Naive thymus-derived CD4-positive, alpha-beta T cell (primary cell): ENCODE measurements at regions of chr1 and their contacts with region 1.

Region 1: GRCh38 chr1:211382714-211383480 is 56.3 kb downstream of the TRAF5 start:
- DNase-seq: peak; percentile 53 to 85 (median 64)
- ATAC-seq: peak; percentile 94
- H3K4me3 ChIP-seq: peak overlapping the region; percentile 77
- H3K4me3 Mint-ChIP-seq: peak overlapping the region; percentile 87 to 97 (median 92)
- H3K27ac ChIP-seq: peak overlapping the region; percentile 80
- H3K27ac Mint-ChIP-seq: peak overlapping the region; percentile 92 to 98 (median 95)
- H3K4me1 ChIP-seq: peaks cover 5% of the 10 kb centered on the region in 2 donors
- H3K4me1 Mint-ChIP-seq: peaks cover 0 to 39% (median 31%) of the 10 kb centered on the region in 7 donors
- H3K27me3 ChIP-seq: no peaks in the 10 kb centered on the region
- H3K27me3 Mint-ChIP-seq: peaks cover 0 to 5% (median 0%) of the 10 kb centered on the region in 5 donors

Region 2: GRCh38 chr1:210978316-210978993 is 404.4 kb before region 1 on chr1:
- CTCF ChIA-PET with region 1: no interaction called
- POLR2A ChIA-PET with region 1: no interaction called
- intact Hi-C with region 1: no loop called
- DNase-seq: no peak
- ATAC-seq: no peak
- H3K4me3 ChIP-seq: no peak overlapping the region
- H3K4me3 Mint-ChIP-seq: no peak overlapping the region
- H3K27ac ChIP-seq: no peak overlapping the region
- H3K27ac Mint-ChIP-seq: no peak overlapping the region
- H3K4me1 ChIP-seq: no peaks in the 10 kb centered on the region
- H3K4me1 Mint-ChIP-seq: no peaks in the 10 kb centered on the region
- H3K27me3 ChIP-seq: no peaks in the 10 kb centered on the region
- H3K27me3 Mint-ChIP-seq: peaks cover 0 to 19% (median 6%) of the 10 kb centered on the region in 5 donors

Region 3: GRCh38 chr1:211066781-211067384 is 316.0 kb before region 1 on chr1:
- CTCF ChIA-PET with region 1: no interaction called
- POLR2A ChIA-PET with region 1: no interaction called
- intact Hi-C with region 1: no loop called
- DNase-seq: no peak
- ATAC-seq: no peak
- H3K4me3 ChIP-seq: no peak overlapping the region
- H3K4me3 Mint-ChIP-seq: no peak overlapping the region
- H3K27ac ChIP-seq: no peak overlapping the region
- H3K27ac Mint-ChIP-seq: no peak overlapping the region
- H3K4me1 ChIP-seq: no peaks in the 10 kb centered on the region
- H3K4me1 Mint-ChIP-seq: no peaks in the 10 kb centered on the region
- H3K27me3 ChIP-seq: no peaks in the 10 kb centered on the region
- H3K27me3 Mint-ChIP-seq: peaks cover 0 to 31% (median 17%) of the 10 kb centered on the region in 5 donors

Region 4: DNA sequence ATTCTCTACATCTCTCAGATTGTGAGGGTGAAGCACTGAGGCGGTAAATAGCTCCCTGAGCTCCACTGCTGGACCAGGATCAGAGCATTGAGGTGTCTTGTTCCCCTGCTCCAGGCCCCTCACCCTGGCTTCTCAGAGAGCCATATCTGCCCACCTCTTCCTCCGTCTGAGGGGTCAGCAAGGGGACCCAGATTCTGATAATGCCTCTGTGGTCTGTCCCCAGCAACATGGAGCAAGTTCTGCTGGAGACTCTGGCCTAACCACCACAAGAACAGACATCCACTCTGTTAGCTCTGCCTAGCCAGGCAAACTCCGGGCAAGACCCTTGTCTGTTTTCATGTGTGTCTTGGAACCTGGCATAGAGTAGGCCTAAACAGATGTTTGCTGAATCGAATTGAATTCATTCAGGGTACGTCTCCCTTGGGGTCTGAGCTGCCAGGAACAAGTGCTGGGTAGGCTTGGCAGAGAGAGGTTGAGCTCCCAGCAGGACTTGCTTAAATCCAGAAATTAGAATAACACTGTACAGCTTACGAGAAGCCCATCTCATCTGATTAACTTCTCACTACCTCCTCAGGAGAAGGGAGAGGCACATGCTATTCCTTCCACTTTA is 53.9 kb before region 1 on chr1:
- CTCF ChIA-PET with region 1: interaction called, 3 read pairs
- POLR2A ChIA-PET with region 1: interaction called, 10 read pairs
- intact Hi-C with region 1: loop called in 1 of 2 experiments (anchors 1 kb)
- DNase-seq: no peak
- ATAC-seq: no peak
- H3K4me3 ChIP-seq: peak overlapping the region; percentile 72
- H3K4me3 Mint-ChIP-seq: peak overlapping the region; percentile 87 to 98 (median 97)
- H3K27ac ChIP-seq: peak overlapping the region; percentile 82
- H3K27ac Mint-ChIP-seq: peak overlapping the region; percentile 87 to 98 (median 94)
- H3K4me1 ChIP-seq: peaks cover 39 to 50% of the 10 kb centered on the region in 2 donors
- H3K4me1 Mint-ChIP-seq: peaks cover 67 to 88% (median 83%) of the 10 kb centered on the region in 7 donors
- H3K27me3 ChIP-seq: no peaks in the 10 kb centered on the region
- H3K27me3 Mint-ChIP-seq: no peaks in the 10 kb centered on the region

Region 5: GRCh38 chr1:211352985-211353515 is 29.8 kb before region 1 on chr1:
- CTCF ChIA-PET with region 1: no interaction called
- POLR2A ChIA-PET with region 1: interaction called, 3 read pairs
- intact Hi-C with region 1: loop called in 1 of 2 experiments (anchors 1 kb)
- DNase-seq: peak in 7 of 9 donors; percentile 28 to 53 (median 45)
- ATAC-seq: peak; percentile 83
- H3K4me3 ChIP-seq: peak overlapping the region; percentile 45
- H3K4me3 Mint-ChIP-seq: peak overlapping the region; percentile 78 to 92 (median 84)
- H3K27ac ChIP-seq: peak overlapping the region; percentile 16
- H3K27ac Mint-ChIP-seq: peak overlapping the region; percentile 81 to 98 (median 91)
- H3K4me1 ChIP-seq: peaks cover 31 to 46% of the 10 kb centered on the region in 2 donors
- H3K4me1 Mint-ChIP-seq: peaks cover 42 to 74% (median 65%) of the 10 kb centered on the region in 7 donors
- H3K27me3 ChIP-seq: no peaks in the 10 kb centered on the region
- H3K27me3 Mint-ChIP-seq: no peaks in the 10 kb centered on the region